ENCODE measurements at regions of chr11 and their contacts with region 1.

Region 1: GRCh38 chr11:46729110-46730027 is 10.4 kb downstream of the F2 start:
- DNase-seq: no peak
- H3K4me3 ChIP-seq: no peak overlapping the region
- H3K27ac ChIP-seq: no peak overlapping the region
- H3K4me1 ChIP-seq: no peaks in the 10 kb centered on the region
- H3K27me3 ChIP-seq: no peaks in the 10 kb centered on the region
- CTCF ChIP-seq: no peak

Region 2: GRCh38 chr11:48000432-48000831 is 1271.1 kb after region 1 on chr11:
- CTCF ChIA-PET with region 1: no interaction called
- POLR2A ChIA-PET with region 1: interaction called, 12 read pairs
- intact Hi-C with region 1: no loop called
- DNase-seq: no peak
- H3K4me3 ChIP-seq: no peak overlapping the region
- H3K27ac ChIP-seq: no peak overlapping the region
- H3K4me1 ChIP-seq: no peaks in the 10 kb centered on the region
- H3K27me3 ChIP-seq: no peaks in the 10 kb centered on the region
- CTCF ChIP-seq: no peak